ENCODE measurements at regions of chr13 and their contacts with region 1.

Region 1: DNA sequence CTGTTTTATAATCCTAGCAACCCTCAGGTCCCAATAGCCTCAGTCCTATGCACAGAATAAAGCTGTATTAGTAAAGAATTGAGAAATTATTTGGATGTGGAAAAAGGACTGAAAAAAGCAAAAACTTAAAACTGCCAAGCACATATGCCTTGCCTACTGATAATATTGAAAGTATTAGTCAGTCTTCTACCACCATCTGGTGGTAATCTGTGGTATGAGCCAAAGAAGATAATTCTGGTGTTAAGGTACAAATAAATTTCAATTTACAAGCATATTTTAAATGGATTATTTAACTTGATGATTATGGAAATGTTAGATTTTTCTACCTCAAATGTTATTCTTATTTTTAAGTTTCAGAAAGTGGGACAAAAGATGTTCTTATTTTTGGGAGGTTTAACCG is 460.3 kb upstream of the KLHL1 start:
- H3K4me3 ChIP-seq: no peak overlapping the region
- H3K27ac ChIP-seq: no peak overlapping the region
- H3K4me1 ChIP-seq: no peaks in the 10 kb centered on the region
- CTCF ChIP-seq: no peak

Region 2: DNA sequence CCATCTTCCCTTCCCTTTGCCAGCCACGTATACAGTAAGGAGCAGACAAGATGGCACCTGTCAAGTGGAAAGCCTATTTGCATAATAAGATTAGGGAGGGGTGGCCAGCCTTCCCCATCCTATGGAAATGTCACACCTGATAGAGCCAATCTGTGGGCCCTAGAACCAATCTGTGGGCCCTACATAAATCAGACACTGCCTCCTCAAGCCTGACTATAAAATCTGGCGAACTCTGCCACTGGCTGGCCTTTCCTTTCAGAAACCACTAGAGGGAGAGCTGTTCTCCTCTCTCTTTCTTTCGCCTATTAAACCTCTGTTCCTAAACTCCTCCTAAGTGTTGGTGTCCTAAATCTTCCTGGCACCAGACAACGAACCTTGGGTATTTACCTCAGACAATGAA is 228.8 kb before region 1 on chr13:
- CTCF ChIA-PET with region 1: interaction called, 10 read pairs
- POLR2A ChIA-PET with region 1: no interaction called
- H3K4me3 ChIP-seq: no peak overlapping the region
- H3K27ac ChIP-seq: no peak overlapping the region
- H3K4me1 ChIP-seq: no peaks in the 10 kb centered on the region
- CTCF ChIP-seq: no peak

Region 3: DNA sequence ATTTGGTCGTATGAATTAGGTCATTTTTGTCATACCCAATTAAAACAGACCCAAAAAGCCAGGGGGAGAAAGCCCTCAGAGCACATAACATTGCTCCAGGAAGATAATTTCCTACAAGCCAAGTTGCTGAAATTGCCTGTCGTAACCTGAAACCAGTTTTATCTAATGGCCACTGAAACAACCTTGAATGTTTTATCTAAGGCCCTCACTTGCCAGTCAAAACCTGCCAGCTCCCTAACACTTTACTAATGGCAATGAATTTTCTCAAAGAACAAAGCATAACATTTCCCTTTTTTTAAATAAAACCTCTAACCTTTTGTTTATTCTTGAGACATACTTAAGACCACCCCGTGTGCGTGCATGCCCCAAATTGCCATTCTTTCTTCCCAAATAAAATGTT is 35.9 kb after region 1 on chr13:
- CTCF ChIA-PET with region 1: no interaction called
- POLR2A ChIA-PET with region 1: no interaction called
- H3K4me3 ChIP-seq: no peak overlapping the region
- H3K27ac ChIP-seq: no peak overlapping the region
- H3K4me1 ChIP-seq: no peaks in the 10 kb centered on the region
- CTCF ChIP-seq: no peak

Region 4: DNA sequence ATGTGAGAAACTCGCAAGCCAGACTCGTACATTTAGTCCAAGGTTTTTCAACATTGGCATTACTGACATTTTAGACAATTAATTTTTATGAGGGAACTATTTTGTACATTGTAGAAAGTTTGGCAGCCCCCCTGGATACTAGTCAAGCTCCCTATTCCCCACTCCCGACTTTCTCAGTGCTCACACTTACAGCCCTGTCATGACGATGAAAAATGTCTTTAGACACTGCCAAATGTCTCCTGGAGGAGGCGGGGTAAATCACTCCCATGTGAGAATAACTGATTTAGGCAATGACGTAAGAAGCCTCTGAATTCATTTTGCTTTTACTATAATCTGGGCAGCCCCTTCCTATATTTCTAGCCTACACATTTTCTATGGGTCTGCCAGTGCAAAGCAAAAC is 75.5 kb after region 1 on chr13:
- CTCF ChIA-PET with region 1: no interaction called
- POLR2A ChIA-PET with region 1: no interaction called
- H3K4me3 ChIP-seq: no peak overlapping the region
- H3K27ac ChIP-seq: no peak overlapping the region
- H3K4me1 ChIP-seq: no peaks in the 10 kb centered on the region
- CTCF ChIP-seq: no peak

Measured in HEK293 (cell line).